Activated naive CD4-positive, alpha-beta T cell treated with anti-CD3 and anti-CD28 coated beads, Interleukin-2, amount 10 ng/mL, durations not matched to agents 7 days and 5 days (primary cell): ENCODE measurements at regions of chr1 and their contacts with region 1.

Region 1: DNA sequence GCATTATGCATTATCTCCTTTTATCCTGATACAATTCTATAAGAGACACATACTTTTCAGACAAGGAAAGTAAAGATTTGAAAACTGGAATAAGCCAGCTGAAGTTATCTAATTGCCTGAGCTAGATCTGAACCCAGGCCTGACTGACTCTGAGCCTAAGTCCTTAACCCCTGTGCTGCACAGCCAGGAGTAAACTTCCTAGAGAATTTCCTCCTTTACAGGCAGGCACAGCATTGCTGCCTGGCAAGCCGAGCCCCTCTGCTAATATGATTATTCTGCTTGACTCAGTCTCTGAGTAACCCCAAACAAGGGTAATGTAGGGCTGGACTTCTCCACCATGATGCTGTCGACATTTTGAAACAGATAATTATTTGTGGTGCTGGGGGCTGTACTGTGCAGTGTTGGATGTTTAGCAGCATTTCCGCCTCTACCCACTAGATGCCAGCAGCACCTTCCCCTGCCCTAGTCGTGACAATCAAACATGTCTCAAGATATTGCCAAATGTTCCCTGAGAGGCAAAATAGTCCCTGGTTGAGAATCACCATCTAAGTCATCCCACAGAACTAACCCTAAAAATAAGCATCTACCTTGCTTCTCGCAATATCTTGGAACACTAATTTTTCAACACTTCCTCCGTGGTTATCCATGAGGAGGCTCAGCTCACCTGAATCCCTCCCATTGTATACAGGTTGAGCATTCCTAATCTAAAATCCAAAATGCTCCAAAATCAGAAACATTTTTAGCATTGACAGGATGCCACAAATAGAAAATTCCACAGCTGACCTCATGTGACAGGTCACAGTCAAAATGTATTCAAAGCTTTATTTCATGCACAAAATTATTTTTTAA is 18.5 kb downstream of the CAMK1G start:
- DNase-seq: peak; percentile 58
- H3K4me3 Mint-ChIP-seq: no peak overlapping the region
- H3K27ac Mint-ChIP-seq: no peak overlapping the region
- H3K4me1 Mint-ChIP-seq: peaks cover 4% of the 10 kb centered on the region
- H3K27me3 Mint-ChIP-seq: peaks cover 13% of the 10 kb centered on the region

Region 2: GRCh38 chr1:209490013-209490412 is 112.0 kb before region 1 on chr1:
- CTCF ChIA-PET with region 1: no interaction called
- DNase-seq: no peak
- H3K4me3 Mint-ChIP-seq: no peak overlapping the region
- H3K27ac Mint-ChIP-seq: no peak overlapping the region
- H3K4me1 Mint-ChIP-seq: no peaks in the 10 kb centered on the region
- H3K27me3 Mint-ChIP-seq: no peaks in the 10 kb centered on the region

Region 3: GRCh38 chr1:209542585-209542984 is 59.4 kb before region 1 on chr1:
- CTCF ChIA-PET with region 1: no interaction called
- DNase-seq: no peak
- H3K4me3 Mint-ChIP-seq: no peak overlapping the region
- H3K27ac Mint-ChIP-seq: no peak overlapping the region
- H3K4me1 Mint-ChIP-seq: no peaks in the 10 kb centered on the region
- H3K27me3 Mint-ChIP-seq: peaks cover 52% of the 10 kb centered on the region

Region 4: DNA sequence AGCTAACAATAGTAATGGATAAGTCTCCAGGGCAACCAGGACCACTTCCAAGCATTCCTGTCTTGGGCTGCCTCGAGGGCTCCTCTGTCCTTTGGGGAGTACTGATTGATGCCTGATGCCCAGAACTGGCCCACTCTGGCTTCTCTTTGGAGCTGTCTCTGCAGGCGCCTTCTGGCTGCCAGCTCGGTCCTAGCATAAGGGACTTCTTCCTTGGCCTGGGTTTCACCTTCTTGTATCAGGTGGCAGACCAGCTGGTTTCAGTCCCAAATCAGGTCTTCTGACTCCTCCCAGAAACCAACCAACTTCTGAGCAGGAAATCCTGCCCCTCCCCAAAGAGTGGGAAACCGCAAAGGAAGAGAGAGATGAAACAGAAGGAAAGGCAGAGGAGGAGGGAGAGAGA is 83.8 kb after region 1 on chr1:
- CTCF ChIA-PET with region 1: interaction called, 12 read pairs
- DNase-seq: peak; percentile 73
- H3K4me3 Mint-ChIP-seq: peak overlapping the region; percentile 43
- H3K27ac Mint-ChIP-seq: peak overlapping the region; percentile 69
- H3K4me1 Mint-ChIP-seq: peaks cover 54% of the 10 kb centered on the region
- H3K27me3 Mint-ChIP-seq: peaks cover 8% of the 10 kb centered on the region